ENCODE measurements at regions of chr9 and their contacts with region 1.

Region 1: DNA sequence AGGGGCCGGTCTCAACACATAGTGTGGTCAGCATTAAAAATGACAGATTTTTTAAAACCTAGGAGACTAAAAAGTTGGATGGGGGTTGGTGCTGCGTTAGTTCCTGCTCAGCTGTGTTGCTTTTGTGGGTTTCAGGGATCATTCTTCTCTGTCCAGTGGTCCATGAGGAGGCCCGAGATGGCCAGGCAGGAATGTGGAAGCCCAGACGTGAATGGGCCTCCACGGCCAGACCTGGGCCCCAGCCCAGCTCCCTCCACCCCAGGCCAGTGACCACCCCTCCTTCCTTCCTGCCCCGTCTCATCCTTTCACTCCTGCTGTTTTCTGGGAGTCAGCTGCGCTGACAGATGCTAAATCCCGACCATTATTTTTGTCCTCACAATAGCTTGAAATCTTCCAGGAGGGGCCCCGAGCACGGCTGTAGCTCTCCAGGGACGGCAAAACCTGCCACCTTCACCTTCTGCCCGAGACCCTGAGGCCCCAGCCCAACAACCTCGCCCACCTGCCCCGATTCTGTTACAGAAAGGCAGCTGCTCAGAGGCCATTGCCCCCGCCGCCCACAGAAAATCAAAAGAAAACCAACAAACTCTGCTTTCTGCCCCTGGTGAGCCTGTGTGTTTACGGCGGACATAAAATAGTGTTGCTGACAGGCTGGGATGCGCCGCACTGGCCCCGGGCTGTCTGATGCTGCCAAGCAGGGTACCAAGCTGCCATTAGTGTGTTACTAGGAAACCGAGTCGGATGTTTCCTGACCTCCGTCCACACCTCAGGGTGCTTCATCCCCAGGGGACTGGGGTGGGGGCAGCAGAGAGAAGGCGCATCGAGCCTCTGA is 83.7 kb upstream of the SARDH start:
- DNase-seq: peak; percentile 83
- ATAC-seq: peak; percentile 56
- H3K4me3 ChIP-seq: peak overlapping the region in 4 of 5 experiments; percentile 31 to 63 (median 40)
- H3K4me3 Mint-ChIP-seq: peak overlapping the region; percentile 88
- H3K27ac ChIP-seq: peak overlapping the region; percentile 99
- H3K27ac Mint-ChIP-seq: peak overlapping the region; percentile 97
- H3K4me1 ChIP-seq: peaks cover 55 to 70% of the 10 kb centered on the region in 2 donors
- H3K4me1 Mint-ChIP-seq: peaks cover 81% of the 10 kb centered on the region
- H3K27me3 ChIP-seq: no peaks in the 10 kb centered on the region
- H3K27me3 Mint-ChIP-seq: no peaks in the 10 kb centered on the region
- CTCF ChIP-seq: no peak

Region 2: DNA sequence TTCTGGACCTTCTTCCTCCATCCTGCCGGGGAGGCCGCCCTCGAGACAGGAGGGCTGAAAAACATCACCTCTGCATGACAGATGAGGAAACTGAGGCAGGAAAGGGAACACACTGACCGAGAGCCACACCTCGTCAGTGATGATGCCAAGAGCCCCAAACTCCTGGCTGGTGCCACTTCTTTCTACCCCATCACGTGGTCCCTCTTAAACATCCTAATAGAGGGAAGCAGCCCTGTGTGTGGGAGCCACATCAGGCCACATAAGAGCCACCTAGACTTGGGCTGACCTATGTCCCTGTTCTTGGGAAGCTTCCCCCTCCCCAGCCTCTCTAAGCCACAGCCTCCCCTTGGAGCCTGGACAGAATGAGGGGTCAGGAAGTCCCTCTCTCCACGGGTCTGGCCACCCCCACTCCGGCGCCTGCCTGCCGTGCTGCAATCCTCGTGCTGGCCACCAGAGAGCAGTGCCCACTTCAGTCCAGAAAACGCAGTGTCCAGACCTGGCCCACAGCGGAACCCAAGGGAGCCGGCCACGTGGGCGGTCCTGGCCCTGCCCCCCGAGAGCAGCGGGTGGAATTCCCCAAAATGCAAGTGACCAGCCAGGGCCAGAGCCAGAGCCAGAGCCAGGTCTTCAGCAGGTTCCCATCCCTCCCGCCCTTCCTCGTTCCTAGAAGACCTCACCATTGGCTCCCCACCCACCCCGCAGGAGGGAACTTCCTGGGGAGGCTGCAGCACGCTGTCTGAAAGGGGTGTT is 28.9 kb before region 1 on chr9:
- CTCF ChIA-PET with region 1: interaction called, 5 read pairs
- POLR2A ChIA-PET with region 1: no interaction called
- intact Hi-C with region 1: loop called (anchors 1 kb)
- DNase-seq: peak; percentile 77
- ATAC-seq: peak; percentile 85
- H3K4me3 ChIP-seq: peak overlapping the region in 3 of 5 experiments; percentile 11 to 43 (median 20)
- H3K4me3 Mint-ChIP-seq: peak overlapping the region; percentile 52
- H3K27ac ChIP-seq: peak overlapping the region; percentile 17 to 41
- H3K27ac Mint-ChIP-seq: peak overlapping the region; percentile 70
- H3K4me1 ChIP-seq: peaks cover 48 to 56% of the 10 kb centered on the region in 2 donors
- H3K4me1 Mint-ChIP-seq: peaks cover 69% of the 10 kb centered on the region
- H3K27me3 ChIP-seq: no peaks in the 10 kb centered on the region
- H3K27me3 Mint-ChIP-seq: no peaks in the 10 kb centered on the region
- CTCF ChIP-seq: peak; percentile 87

Region 3: GRCh38 chr9:133945314-133945975 is 123.6 kb after region 1 on chr9:
- CTCF ChIA-PET with region 1: interaction called, 3 read pairs
- POLR2A ChIA-PET with region 1: no interaction called
- intact Hi-C with region 1: loop called (anchors 1 kb)
- DNase-seq: peak; percentile 90
- ATAC-seq: peak; percentile 74
- H3K4me3 ChIP-seq: peak overlapping the region in 3 of 5 experiments; percentile 1 to 44 (median 25)
- H3K4me3 Mint-ChIP-seq: peak overlapping the region; percentile 89
- H3K27ac ChIP-seq: peak overlapping the region; percentile 75 to 83
- H3K27ac Mint-ChIP-seq: peak overlapping the region; percentile 97
- H3K4me1 ChIP-seq: peaks cover 34 to 64% of the 10 kb centered on the region in 2 donors
- H3K4me1 Mint-ChIP-seq: peaks cover 78% of the 10 kb centered on the region
- H3K27me3 ChIP-seq: no peaks in the 10 kb centered on the region
- H3K27me3 Mint-ChIP-seq: no peaks in the 10 kb centered on the region
- CTCF ChIP-seq: no peak